ENCODE measurements at regions of chr6 and their contacts with region 1.

Region 1: DNA sequence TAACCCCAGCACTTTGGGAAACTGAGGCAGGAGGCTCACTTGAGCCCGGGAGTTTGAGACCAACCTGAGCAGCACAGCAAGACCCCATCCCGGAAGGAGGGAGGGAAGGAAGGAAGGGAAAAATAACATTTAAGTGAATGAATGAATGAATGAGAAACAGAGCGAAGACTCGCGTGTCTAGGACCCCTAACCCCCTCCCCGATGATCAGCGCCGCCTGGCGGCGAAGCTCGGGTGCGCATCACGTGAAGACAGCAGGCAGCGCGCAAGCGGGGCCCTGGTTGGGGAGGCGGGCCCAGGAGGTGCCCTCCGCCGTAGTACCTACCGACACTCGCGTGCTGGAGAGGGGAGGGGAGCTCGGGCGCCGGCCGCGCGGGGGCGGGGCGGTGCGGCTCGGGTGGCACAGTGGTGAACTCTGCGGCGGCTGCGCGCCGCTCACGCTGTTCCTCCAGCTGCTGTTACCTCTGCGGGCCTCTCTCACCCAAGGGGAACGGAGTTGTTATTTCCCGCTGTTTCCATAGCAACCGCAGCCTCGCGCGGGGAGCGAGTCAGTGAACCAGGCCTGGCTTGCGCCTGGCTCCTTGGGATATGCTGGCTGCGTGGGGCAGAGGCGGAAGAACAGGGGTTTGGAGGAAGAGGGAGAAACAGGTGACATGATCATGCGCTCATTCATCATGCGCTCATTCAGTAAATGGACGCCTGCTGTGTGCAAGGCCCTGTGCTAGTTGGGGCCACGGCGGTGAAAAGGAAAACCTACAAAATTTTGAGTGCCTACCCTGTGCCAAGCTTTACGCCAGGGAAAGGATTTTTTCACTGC is 2.0 kb upstream of the DCDC2 start:
- DNase-seq: peak; percentile 69
- CTCF ChIP-seq: peak; percentile 91

Region 2: GRCh38 chr6:24099181-24099580 is 260.7 kb before region 1 on chr6:
- CTCF ChIA-PET with region 1: no interaction called
- POLR2A ChIA-PET with region 1: no interaction called
- DNase-seq: no peak
- CTCF ChIP-seq: no peak

Region 3: DNA sequence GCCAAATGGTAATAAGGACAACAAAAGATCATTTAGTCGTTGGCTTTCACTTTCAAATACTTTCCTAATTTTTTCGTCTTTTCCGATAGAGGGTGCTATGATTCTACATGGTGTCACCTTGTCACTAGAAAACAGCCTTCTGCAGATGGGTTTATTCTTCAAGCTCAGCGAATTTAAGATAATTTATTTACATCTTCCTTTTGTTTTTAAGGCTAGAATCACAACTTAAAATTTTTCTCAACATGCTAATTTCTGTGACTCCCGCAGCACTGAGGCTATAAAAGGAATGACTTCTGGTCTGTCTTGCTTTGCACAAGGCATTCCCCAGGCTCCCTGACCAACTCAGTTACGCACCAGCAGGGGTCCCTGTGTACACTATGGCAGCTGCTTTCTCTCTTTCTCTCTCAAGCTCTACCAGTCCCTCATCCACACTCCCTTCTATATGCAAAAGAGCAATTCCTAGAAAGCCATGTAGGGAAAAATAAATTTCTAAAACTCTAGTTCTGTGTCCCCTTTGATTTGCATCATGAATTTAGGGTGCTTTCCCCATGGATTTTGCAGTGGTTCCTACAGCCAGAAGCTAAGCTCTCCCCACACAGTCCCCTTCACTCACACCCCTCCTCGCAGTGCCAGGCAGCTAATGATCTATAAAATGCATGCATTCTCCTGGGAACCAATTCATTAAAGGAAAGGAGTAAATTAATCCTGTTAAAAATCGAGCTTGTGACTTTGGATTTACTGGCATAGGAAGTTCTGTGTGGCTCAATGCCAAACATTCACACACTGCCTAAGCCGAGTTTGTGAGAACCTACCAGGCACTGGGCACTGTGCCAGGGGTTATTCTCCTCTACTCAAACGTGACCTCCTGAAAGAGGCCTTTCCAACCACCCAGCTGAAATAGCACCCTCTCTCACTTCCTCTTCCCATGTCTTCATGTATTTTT is 76.5 kb before region 1 on chr6:
- CTCF ChIA-PET with region 1: interaction called, 16 read pairs
- POLR2A ChIA-PET with region 1: no interaction called
- DNase-seq: peak; percentile 68
- CTCF ChIP-seq: peak; percentile 55

Region 4: DNA sequence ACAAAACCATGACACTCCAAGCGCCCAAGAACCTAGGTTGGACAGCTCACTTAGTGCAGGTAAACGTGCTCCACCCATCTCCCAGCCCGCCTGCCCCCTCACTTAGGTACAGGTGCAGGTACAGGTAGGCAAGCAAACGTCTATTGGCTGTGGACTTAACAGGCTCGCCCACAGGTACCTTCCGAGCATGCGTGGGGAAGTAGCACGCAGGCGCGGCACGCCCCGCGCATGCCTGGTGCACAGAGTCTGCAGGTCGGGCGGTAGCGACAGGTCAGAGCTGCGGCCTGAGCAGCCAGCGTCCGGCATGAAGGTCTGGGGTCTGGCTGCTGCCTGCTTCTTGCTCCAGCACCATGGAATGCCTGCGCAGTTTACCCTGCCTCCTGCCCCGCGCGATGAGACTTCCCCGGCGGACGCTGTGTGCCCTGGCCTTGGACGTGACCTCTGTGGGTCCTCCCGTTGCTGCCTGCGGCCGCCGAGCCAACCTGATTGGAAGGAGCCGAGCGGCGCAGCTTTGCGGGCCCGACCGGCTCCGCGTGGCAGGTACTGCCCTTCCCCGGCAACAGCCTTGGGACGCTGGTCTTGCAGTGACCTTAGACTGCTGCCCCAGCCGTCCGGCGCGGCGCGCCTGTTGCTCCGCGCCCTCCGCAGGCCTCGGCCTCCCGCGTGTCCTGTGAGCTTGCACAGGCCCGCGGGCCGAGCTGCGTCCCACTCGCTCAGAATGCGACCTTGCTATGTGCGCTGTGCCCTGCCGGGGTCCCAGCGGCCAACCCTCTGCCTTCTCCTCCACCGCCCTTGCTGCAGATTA is 43.1 kb after region 1 on chr6 and contains the start of gene MRS2:
- CTCF ChIA-PET with region 1: no interaction called
- POLR2A ChIA-PET with region 1: no interaction called
- DNase-seq: peak; percentile 91
- CTCF ChIP-seq: no peak

Region 5: GRCh38 chr6:24537771-24538385 is 178.0 kb after region 1 on chr6:
- CTCF ChIA-PET with region 1: no interaction called
- POLR2A ChIA-PET with region 1: no interaction called
- DNase-seq: no peak
- CTCF ChIP-seq: no peak